Activated T-helper 1 cell treated with anti-CD3 and anti-CD28 coated beads, Interleukin-12 subunit alpha, Interleukin-12 subunit beta, Interleukin-2, Interleukin-4 antibody, amounts not matched to agents 30 ng/mL and 10 ng/mL and 1 ng/mL, durations not matched to agents 14 hours and 24 hours and 36 hours (primary cell): ENCODE measurements at regions of chr7 and their contacts with region 1.

Region 1: DNA sequence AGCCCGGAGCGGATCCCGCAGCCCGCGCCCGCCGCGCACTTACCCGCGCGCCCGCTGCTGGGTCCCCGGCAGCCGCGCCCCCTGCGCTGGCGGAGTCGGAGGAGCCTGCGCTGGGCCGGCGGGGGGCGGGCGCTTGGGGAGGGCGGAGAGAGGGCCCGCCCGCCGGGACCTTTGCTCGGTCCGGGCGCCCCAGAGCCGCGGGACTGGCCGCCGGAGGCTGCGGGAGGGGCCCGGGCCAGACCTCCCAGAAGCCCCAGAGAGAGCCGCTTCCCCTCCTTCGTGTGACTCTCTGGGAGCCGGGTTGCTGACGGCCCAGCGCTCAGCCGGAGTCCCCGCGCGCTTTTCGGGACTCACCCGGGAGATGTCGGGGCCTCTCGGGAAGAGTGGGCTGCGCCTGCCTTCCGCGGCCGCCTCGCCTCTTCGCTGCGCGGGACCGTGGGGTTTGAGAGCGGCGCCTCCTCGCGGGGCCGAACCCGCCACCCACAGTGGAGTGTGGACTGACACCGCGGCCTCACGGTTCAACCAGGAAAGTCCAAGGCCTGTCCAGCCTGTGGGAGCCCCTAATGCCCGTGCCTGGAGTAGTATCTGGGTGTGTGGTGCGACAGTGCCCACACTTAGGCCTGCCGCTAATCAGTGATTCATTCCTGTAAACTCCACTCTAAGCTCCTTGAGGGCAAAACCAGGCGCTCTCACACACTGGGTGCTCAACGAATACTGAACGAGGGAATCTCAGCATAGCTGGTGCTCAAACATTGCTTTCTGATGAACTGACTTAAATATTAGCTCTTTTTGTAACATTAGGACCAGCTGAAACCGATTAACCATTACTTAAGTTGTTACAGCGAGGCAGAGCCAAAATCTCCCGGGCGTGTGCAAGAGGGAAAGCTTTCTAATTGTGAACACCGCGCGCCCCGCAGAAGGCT is at the start of gene GSDME:
- DNase-seq: peak; percentile 21
- H3K4me3 Mint-ChIP-seq: peak within 1 kb of the TSS; percentile 91
- H3K27ac Mint-ChIP-seq: peak within 1 kb of the TSS; percentile 84
- H3K4me1 Mint-ChIP-seq: peaks cover 38% of the 10 kb centered on the region
- H3K27me3 Mint-ChIP-seq: peaks cover 44% of the 10 kb centered on the region
- total RNA-seq, gene GSDME: 10.6 and 11.0 TPM in 2 replicates

Region 2: GRCh38 chr7:24290004-24290641 is 467.5 kb before region 1 on chr7:
- intact Hi-C with region 1: loop called (anchors 1 kb)
- DNase-seq: peak; percentile 35
- H3K4me3 Mint-ChIP-seq: no peak overlapping the region
- H3K27ac Mint-ChIP-seq: no peak overlapping the region
- H3K4me1 Mint-ChIP-seq: peaks cover 8% of the 10 kb centered on the region
- H3K27me3 Mint-ChIP-seq: peaks cover 35% of the 10 kb centered on the region

Region 3: DNA sequence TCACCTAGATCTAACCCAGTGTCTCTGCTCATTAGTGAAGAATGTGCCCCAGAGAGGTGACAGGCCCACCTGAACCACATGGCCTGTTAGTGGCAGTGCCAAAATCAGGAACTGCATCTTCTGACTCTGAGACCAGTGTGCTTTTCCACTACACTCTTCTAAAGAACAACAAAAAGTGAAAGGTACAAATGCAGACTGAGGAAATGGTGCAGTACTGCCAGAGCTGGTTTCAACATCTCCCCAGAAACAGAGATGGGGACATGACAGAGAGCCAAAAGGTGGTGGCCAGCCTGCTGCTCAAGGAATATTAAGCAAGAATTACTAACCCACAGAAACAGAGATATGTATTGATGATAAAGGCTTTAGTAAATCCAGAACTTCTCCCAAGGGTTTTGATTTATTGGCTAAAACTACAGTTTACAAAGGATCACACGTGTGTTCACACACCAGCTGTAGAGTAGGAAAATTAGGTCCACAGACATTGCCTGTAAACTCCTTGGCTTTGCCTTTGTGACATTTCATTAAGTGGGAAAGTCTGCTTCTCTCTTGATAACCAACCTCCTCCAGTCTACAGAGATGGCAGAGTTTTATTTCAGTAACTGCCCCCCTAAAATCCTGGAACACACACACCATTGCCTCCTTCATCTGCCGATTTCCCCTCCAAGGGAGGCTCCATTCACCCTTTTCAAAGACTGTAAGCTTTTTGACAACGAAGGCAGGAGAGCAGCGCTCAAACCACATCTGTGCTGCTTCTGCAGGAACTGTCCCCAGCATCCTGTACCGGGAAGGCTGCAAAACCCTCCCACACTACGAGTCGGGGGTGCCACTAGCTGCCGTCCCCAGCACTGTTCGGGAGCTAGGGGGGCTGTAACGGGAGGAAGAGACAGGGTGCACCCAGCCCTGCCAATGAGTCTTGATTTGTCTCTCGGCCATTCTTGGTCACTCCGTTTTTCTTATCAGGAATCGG is 30.2 kb before region 1 on chr7:
- intact Hi-C with region 1: loop called (anchors 1 kb)
- DNase-seq: no peak
- H3K4me3 Mint-ChIP-seq: peak overlapping the region; percentile 44
- H3K27ac Mint-ChIP-seq: peak overlapping the region; percentile 74
- H3K4me1 Mint-ChIP-seq: peaks cover 34% of the 10 kb centered on the region
- H3K27me3 Mint-ChIP-seq: peaks cover 11% of the 10 kb centered on the region

Region 4: GRCh38 chr7:24907311-24907886 is 149.8 kb after region 1 on chr7:
- intact Hi-C with region 1: loop called (anchors 2 kb)
- DNase-seq: peak; percentile 38
- H3K4me3 Mint-ChIP-seq: no peak overlapping the region
- H3K27ac Mint-ChIP-seq: no peak overlapping the region
- H3K4me1 Mint-ChIP-seq: peaks cover 48% of the 10 kb centered on the region
- H3K27me3 Mint-ChIP-seq: no peaks in the 10 kb centered on the region

Region 5: DNA sequence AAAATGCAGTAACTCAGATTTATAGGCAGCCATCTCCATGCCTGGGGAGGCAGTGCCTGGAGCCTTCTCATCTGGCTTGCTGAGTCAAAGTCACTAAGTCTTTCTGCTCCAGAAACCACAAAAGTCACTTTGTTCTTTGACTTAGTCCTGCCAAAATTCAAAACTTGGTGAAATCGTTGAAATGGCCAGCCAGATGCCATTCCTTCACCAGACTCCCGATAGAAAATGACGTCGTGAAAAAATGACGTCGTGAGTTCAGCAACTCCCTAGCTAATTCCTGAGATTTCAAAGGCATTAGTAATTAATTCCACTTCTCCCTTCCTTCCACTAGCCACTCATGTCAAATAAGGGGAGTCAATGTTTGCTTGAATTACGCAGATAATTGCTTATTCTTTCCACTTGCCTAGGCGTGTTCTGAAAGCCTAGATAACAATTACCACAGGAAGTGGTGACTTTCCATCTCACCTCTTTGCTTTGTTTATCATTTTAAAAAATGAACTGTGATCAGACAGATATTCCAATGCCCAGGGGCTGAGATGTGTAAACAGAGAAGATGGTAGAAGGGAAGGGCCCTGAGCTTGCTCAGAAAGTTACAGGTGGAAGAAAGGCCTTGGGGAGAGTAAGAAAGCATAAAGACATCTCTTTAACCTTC is 270.9 kb after region 1 on chr7:
- intact Hi-C with region 1: loop called (anchors 2 kb)
- DNase-seq: peak; percentile 13
- H3K4me3 Mint-ChIP-seq: peak overlapping the region; percentile 12
- H3K27ac Mint-ChIP-seq: peak overlapping the region; percentile 93
- H3K4me1 Mint-ChIP-seq: peaks cover 40% of the 10 kb centered on the region
- H3K27me3 Mint-ChIP-seq: peaks cover 12% of the 10 kb centered on the region